H1 (cell line): ENCODE measurements at regions of chr7 and their contacts with region 1.

Region 1: DNA sequence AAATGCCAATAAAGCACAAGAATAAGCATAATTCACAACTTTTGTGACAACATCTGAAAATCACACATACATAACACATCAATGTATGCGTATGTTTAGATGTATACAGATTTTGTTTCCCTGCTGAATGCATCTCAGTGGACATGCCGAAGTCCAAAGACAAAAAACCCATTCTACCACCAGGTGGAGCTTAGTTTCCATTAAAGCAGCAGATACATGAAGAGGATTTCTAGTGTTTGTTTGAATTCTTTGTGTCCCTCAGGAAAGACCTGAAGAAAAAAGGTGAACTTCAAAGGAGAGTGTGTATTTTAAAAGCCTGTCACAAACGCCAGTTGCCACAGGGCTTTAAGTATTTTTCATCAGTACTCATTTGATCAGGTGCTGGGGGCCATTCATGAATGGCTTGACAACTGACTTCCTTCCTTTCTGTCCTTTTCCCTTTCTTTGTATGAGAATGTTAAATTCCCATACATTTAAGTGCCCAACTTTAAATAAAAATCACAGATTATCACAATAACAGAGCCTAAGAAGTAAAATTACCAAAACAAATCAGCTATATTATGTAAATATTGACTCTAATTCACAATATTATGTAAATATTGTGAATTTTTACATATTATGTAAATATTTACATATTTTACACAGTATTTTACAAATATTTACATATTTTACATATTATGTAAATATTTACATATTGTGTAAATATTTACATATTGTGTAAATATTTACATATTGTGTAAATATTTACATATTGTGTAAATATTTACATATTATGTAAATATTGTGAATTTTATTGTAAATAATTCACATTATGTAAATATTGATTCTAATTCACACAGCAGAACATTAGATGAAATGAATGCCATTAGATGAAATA is 343.0 kb downstream of the CRPPA start:
- DNase-seq: no peak
- H3K4me3 ChIP-seq: no peak overlapping the region
- H3K27ac ChIP-seq: no peak overlapping the region
- H3K4me1 ChIP-seq: peaks cover 0 to 2% (median 0%) of the 10 kb centered on the region in 4 experiments; a peak in 1 of 7 replicates
- H3K27me3 ChIP-seq: no peaks in the 10 kb centered on the region
- CTCF ChIP-seq: peak in 2 of 3 experiments; percentile 47 to 64; a peak in 2 of 4 replicates
- EP300 ChIP-seq: no peak
- POLR2A ChIP-seq: no peak
- RAD21 ChIP-seq: peak; percentile 76 to 80

Region 2: GRCh38 chr7:15947754-15948153 is 130.6 kb before region 1 on chr7:
- CTCF ChIA-PET with region 1: no interaction called
- POLR2A ChIA-PET with region 1: no interaction called
- DNase-seq: no peak
- H3K4me3 ChIP-seq: no peak overlapping the region
- H3K27ac ChIP-seq: no peak overlapping the region
- H3K4me1 ChIP-seq: no peaks in the 10 kb centered on the region
- H3K27me3 ChIP-seq: no peaks in the 10 kb centered on the region
- CTCF ChIP-seq: no peak
- EP300 ChIP-seq: no peak
- POLR2A ChIP-seq: no peak
- RAD21 ChIP-seq: no peak

Region 3: GRCh38 chr7:15977663-15978062 is 100.7 kb before region 1 on chr7:
- CTCF ChIA-PET with region 1: no interaction called
- POLR2A ChIA-PET with region 1: no interaction called
- DNase-seq: no peak
- H3K4me3 ChIP-seq: no peak overlapping the region
- H3K27ac ChIP-seq: no peak overlapping the region
- H3K4me1 ChIP-seq: no peaks in the 10 kb centered on the region
- H3K27me3 ChIP-seq: peaks cover 0 to 1% (median 0%) of the 10 kb centered on the region in 4 experiments; a peak in 1 of 7 replicates
- CTCF ChIP-seq: no peak
- EP300 ChIP-seq: no peak
- POLR2A ChIP-seq: no peak
- RAD21 ChIP-seq: no peak

Region 4: GRCh38 chr7:16098585-16099179 is 20.4 kb after region 1 on chr7:
- CTCF ChIA-PET with region 1: interaction called, 13 read pairs
- POLR2A ChIA-PET with region 1: no interaction called
- DNase-seq: no peak
- H3K4me3 ChIP-seq: no peak overlapping the region
- H3K27ac ChIP-seq: no peak overlapping the region
- H3K4me1 ChIP-seq: peaks cover 0 to 4% (median 0%) of the 10 kb centered on the region in 4 experiments; a peak in 2 of 7 replicates
- H3K27me3 ChIP-seq: no peaks in the 10 kb centered on the region
- CTCF ChIP-seq: peak in 2 of 3 experiments; percentile 57 to 68; a peak in 3 of 4 replicates
- EP300 ChIP-seq: no peak
- POLR2A ChIP-seq: no peak
- RAD21 ChIP-seq: peak; percentile 65 to 66